ENCODE measurements at regions of chr17 and their contacts with region 1.

Region 1: GRCh38 chr17:42577532-42578281 is at the start of gene PSMC3IP:
- DNase-seq: peak; percentile 83 to 93 (median 88)
- H3K4me3 ChIP-seq: peak within 1 kb of the TSS; percentile 83 to 100
- H3K4me3 Mint-ChIP-seq: peak within 1 kb of the TSS; percentile 96 to 99 (median 99)
- H3K27ac ChIP-seq: peak within 1 kb of the TSS; percentile 84
- H3K27ac Mint-ChIP-seq: peak within 1 kb of the TSS; percentile 87 to 99 (median 97)
- H3K4me1 ChIP-seq: peaks cover 17% of the 10 kb centered on the region
- H3K4me1 Mint-ChIP-seq: peaks cover 18 to 44% (median 23%) of the 10 kb centered on the region in 4 donors
- H3K27me3 ChIP-seq: no peaks in the 10 kb centered on the region
- H3K27me3 Mint-ChIP-seq: no peaks in the 10 kb centered on the region
- total RNA-seq, gene PSMC3IP: 3.4 to 4.5 TPM

Region 2: GRCh38 chr17:42536048-42536371 is 41.7 kb before region 1 on chr17 and contains the start of gene NAGLU:
- CTCF ChIA-PET with region 1: interaction called, 6 read pairs
- POLR2A ChIA-PET with region 1: interaction called, 11 read pairs
- intact Hi-C with region 1: loop called (anchors 5 kb)
- DNase-seq: peak; percentile 67 to 76 (median 70)
- H3K4me3 ChIP-seq: peak within 1 kb of the TSS; percentile 43 to 57
- H3K4me3 Mint-ChIP-seq: peak within 1 kb of the TSS; percentile 82 to 93 (median 84)
- H3K27ac ChIP-seq: peak within 1 kb of the TSS; percentile 46
- H3K27ac Mint-ChIP-seq: peak within 1 kb of the TSS; percentile 55 to 84 (median 82)
- H3K4me1 ChIP-seq: peaks cover 33% of the 10 kb centered on the region
- H3K4me1 Mint-ChIP-seq: peaks cover 23 to 55% (median 37%) of the 10 kb centered on the region in 4 donors
- H3K27me3 ChIP-seq: no peaks in the 10 kb centered on the region
- H3K27me3 Mint-ChIP-seq: no peaks in the 10 kb centered on the region
- total RNA-seq, gene NAGLU: 20.6 to 22.8 TPM

Region 3: DNA sequence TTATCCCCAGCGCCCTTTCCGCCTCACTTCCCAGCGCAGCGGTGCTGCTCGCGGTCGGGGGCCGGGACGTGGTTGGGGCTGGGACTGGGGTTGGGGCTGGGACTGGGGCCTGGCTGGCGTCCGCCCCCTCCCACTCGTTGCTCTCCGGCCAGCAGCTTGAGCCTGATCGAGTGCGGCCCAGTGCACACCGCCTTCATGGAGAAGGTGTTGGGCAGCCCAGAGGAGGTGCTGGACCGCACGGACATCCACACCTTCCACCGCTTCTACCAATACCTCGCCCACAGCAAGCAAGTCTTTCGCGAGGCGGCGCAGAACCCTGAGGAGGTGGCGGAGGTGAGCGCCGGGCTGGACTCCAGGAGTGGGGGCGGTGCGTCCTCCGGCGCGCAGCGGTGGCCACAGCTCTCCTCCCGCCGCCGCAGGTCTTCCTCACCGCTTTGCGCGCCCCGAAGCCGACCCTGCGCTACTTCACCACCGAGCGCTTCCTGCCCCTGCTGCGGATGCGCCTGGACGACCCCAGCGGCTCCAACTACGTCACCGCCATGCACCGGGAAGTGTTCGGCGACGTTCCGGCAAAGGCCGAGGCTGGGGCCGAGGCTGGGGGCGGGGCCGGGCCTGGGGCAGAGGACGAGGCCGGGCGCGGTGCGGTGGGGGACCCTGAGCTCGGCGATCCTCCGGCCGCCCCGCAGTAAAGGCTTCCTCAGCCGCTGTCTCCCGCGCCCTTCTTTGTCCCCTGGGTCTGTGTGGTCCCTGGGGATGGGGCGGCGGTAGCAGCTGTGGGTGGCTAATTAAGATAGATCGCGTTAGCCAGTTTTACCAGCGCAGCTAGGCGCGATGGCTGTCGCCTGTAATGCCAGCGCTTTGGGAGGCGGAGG is 23.2 kb before region 1 on chr17:
- CTCF ChIA-PET with region 1: interaction called, 25 read pairs
- POLR2A ChIA-PET with region 1: interaction called, 18 read pairs
- intact Hi-C with region 1: loop called (anchors 2 kb)
- DNase-seq: peak; percentile 68 to 80 (median 74)
- H3K4me3 ChIP-seq: peak overlapping the region; percentile 49 to 69
- H3K4me3 Mint-ChIP-seq: peak overlapping the region; percentile 86 to 92 (median 91)
- H3K27ac ChIP-seq: peak overlapping the region; percentile 77
- H3K27ac Mint-ChIP-seq: peak overlapping the region; percentile 79 to 94 (median 93)
- H3K4me1 ChIP-seq: peaks cover 17% of the 10 kb centered on the region
- H3K4me1 Mint-ChIP-seq: peaks cover 10 to 43% (median 19%) of the 10 kb centered on the region in 4 donors
- H3K27me3 ChIP-seq: no peaks in the 10 kb centered on the region
- H3K27me3 Mint-ChIP-seq: no peaks in the 10 kb centered on the region

Region 4: GRCh38 chr17:42598905-42599304 is 21.2 kb after region 1 on chr17:
- CTCF ChIA-PET with region 1: interaction called, 64 read pairs
- POLR2A ChIA-PET with region 1: interaction called, 9 read pairs
- intact Hi-C with region 1: no loop called
- DNase-seq: no peak
- H3K4me3 ChIP-seq: no peak overlapping the region
- H3K4me3 Mint-ChIP-seq: peak overlapping the region in 3 of 8 donors; percentile 4 to 39 (median 6)
- H3K27ac ChIP-seq: no peak overlapping the region
- H3K27ac Mint-ChIP-seq: peak overlapping the region in 4 of 7 donors; percentile 52 to 77 (median 66)
- H3K4me1 ChIP-seq: peaks cover 19% of the 10 kb centered on the region
- H3K4me1 Mint-ChIP-seq: peaks cover 17 to 48% (median 31%) of the 10 kb centered on the region in 4 donors
- H3K27me3 ChIP-seq: no peaks in the 10 kb centered on the region
- H3K27me3 Mint-ChIP-seq: no peaks in the 10 kb centered on the region

Region 5: DNA sequence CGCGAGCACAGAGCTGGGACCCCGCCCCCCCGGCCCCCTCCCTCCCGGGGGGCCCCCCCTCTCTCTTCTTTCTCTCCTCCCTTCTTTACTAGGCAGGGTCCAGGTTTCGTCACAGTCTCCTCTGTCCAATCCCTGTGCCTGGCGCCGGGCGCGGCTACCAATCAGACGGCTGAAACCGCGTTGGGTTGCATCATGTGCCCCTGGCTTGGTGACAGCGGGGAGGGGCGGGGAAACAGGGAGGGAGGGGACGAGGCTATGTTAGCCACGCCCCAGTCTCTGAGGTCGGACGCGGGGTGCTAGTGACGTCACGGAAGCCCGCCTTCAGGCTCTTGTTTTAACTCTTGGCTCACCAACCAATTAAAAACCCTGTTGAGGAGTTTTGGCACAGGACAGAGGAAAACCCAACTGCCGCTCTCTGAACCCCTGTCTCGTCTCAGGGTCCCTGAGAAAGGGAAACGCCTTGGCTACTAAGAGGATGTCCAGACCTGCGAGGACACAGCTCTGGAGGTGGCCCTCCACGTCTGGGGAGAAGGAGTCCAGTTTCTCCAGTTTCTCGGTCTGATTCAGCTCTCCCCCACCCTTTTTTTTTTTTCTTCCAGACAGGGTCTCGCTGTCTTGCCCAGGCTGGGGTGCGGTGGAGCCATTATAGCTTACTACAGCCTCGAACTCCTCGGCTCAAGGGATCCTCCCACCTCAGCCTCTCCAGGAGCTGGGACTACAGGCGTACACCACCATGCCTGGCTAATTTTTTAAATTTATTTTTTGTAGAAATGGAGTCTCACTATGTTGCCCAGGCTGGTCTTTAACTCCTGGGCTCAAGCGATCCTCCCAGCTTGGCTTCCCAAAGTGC is 99.5 kb after region 1 on chr17:
- CTCF ChIA-PET with region 1: interaction called, 38 read pairs
- POLR2A ChIA-PET with region 1: interaction called, 52 read pairs
- intact Hi-C with region 1: loop called (anchors 1 kb)
- DNase-seq: peak; percentile 91 to 98 (median 93)
- H3K4me3 ChIP-seq: peak overlapping the region; percentile 63 to 75
- H3K4me3 Mint-ChIP-seq: peak overlapping the region; percentile 86 to 97 (median 90)
- H3K27ac ChIP-seq: peak overlapping the region; percentile 42
- H3K27ac Mint-ChIP-seq: peak overlapping the region; percentile 79 to 94 (median 89)
- H3K4me1 ChIP-seq: peaks cover 74% of the 10 kb centered on the region
- H3K4me1 Mint-ChIP-seq: peaks cover 32 to 70% (median 46%) of the 10 kb centered on the region in 4 donors
- H3K27me3 ChIP-seq: peaks cover 36% of the 10 kb centered on the region
- H3K27me3 Mint-ChIP-seq: peaks cover 23 to 27% of the 10 kb centered on the region in 2 donors

Region 6: GRCh38 chr17:42773290-42774035 is 195.8 kb after region 1 on chr17 and contains the start of gene VPS25:
- CTCF ChIA-PET with region 1: interaction called, 12 read pairs
- POLR2A ChIA-PET with region 1: interaction called, 8 read pairs
- intact Hi-C with region 1: no loop called
- DNase-seq: peak; percentile 70 to 77 (median 71)
- H3K4me3 ChIP-seq: peak within 1 kb of the TSS; percentile 90 to 100
- H3K4me3 Mint-ChIP-seq: peak within 1 kb of the TSS; percentile 98 to 99 (median 99)
- H3K27ac ChIP-seq: peak within 1 kb of the TSS; percentile 81
- H3K27ac Mint-ChIP-seq: peak within 1 kb of the TSS; percentile 91 to 99 (median 98)
- H3K4me1 ChIP-seq: peaks cover 17% of the 10 kb centered on the region
- H3K4me1 Mint-ChIP-seq: peaks cover 11 to 28% (median 19%) of the 10 kb centered on the region in 4 donors
- H3K27me3 ChIP-seq: no peaks in the 10 kb centered on the region
- H3K27me3 Mint-ChIP-seq: no peaks in the 10 kb centered on the region
- total RNA-seq, gene VPS25: 39.3 to 43.6 TPM

Region 7: DNA sequence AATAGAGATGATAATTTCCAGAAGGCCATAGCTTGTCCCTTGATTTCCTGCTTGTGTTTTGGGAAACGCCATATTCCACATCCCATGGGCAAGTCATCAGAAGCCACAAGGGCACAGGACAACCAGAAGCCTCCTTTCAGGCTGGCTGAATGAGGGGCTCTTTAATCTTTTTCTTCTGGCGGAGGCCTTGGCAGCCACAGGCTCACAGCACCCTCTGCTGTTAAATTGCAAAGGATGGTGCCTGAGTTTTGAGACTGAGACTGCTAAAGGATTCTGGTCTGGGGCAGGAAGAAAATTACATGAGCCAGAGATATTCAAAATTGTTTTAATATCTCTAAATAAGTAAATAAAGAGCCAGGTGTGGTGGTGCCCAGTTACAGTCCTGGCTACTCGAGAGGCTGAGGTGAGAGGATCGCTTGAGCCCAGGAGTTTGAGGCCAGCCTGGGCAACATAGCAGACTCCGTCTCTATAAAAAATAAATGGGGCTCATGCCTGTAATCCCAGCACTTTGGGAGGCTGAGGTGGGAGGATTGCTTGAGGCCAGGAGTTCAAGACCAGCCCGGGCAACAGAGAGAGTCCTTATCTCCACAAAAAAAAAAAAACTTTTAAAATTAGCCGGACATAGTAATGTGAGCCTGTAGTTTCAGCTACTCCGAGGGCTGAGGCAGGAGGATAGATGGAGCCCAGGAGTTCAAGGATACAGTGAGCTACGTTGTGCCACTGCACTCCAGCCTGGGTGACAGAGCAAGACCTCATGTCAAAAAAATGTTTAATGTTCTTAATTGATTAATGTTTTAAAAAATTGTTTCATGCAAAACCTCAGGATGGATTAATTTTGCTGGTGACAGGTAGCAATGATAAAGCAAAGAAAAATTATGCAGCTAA is 360.2 kb after region 1 on chr17:
- CTCF ChIA-PET with region 1: no interaction called
- POLR2A ChIA-PET with region 1: no interaction called
- intact Hi-C with region 1: loop called (anchors 2 kb)
- DNase-seq: peak in 3 of 5 donors; percentile 3 to 10 (median 5)
- H3K4me3 ChIP-seq: no peak overlapping the region
- H3K4me3 Mint-ChIP-seq: no peak overlapping the region
- H3K27ac ChIP-seq: no peak overlapping the region
- H3K27ac Mint-ChIP-seq: no peak overlapping the region
- H3K4me1 ChIP-seq: no peaks in the 10 kb centered on the region
- H3K4me1 Mint-ChIP-seq: no peaks in the 10 kb centered on the region
- H3K27me3 ChIP-seq: no peaks in the 10 kb centered on the region
- H3K27me3 Mint-ChIP-seq: peaks cover 0 to 7% of the 10 kb centered on the region in 2 donors